Breast epithelium (tissue), 4 donors: ENCODE measurements at regions of chr7 and their contacts with region 1.

Region 1: GRCh38 chr7:25669961-25670841 is 441.9 kb upstream of the NPVF start:
- DNase-seq: peak in 1 of 2 donors; percentile 66
- H3K4me3 ChIP-seq: no peak overlapping the region
- H3K27ac ChIP-seq: peak overlapping the region; percentile 38 to 40
- H3K4me1 ChIP-seq: no peaks in the 10 kb centered on the region
- H3K27me3 ChIP-seq: no peaks in the 10 kb centered on the region
- CTCF ChIP-seq: no peak
- POLR2A ChIP-seq: no peak

Region 2: GRCh38 chr7:25148772-25149575 is 521.2 kb before region 1 on chr7:
- intact Hi-C with region 1: no loop called
- DNase-seq: no peak
- H3K4me3 ChIP-seq: no peak overlapping the region
- H3K27ac ChIP-seq: no peak overlapping the region
- H3K4me1 ChIP-seq: no peaks in the 10 kb centered on the region
- H3K27me3 ChIP-seq: no peaks in the 10 kb centered on the region
- CTCF ChIP-seq: no peak
- POLR2A ChIP-seq: no peak

Region 3: GRCh38 chr7:25680636-25681035 is 10.4 kb after region 1 on chr7:
- intact Hi-C with region 1: loop called (anchors 1 kb)
- DNase-seq: no peak
- H3K4me3 ChIP-seq: no peak overlapping the region
- H3K27ac ChIP-seq: no peak overlapping the region
- H3K4me1 ChIP-seq: no peaks in the 10 kb centered on the region
- H3K27me3 ChIP-seq: no peaks in the 10 kb centered on the region
- CTCF ChIP-seq: no peak
- POLR2A ChIP-seq: no peak